Right ventricle myocardium superior (tissue), 1 donor: ENCODE measurements at regions of chr13 and their contacts with region 1.

Region 1: GRCh38 chr13:103788061-103788652 is 721.9 kb upstream of the SLC10A2 start:
- DNase-seq: peak; percentile 38
- ATAC-seq: peak; percentile 94

Region 2: GRCh38 chr13:103164251-103164650 is 623.9 kb before region 1 on chr13:
- intact Hi-C with region 1: no loop called
- DNase-seq: no peak
- ATAC-seq: no peak

Region 3: DNA sequence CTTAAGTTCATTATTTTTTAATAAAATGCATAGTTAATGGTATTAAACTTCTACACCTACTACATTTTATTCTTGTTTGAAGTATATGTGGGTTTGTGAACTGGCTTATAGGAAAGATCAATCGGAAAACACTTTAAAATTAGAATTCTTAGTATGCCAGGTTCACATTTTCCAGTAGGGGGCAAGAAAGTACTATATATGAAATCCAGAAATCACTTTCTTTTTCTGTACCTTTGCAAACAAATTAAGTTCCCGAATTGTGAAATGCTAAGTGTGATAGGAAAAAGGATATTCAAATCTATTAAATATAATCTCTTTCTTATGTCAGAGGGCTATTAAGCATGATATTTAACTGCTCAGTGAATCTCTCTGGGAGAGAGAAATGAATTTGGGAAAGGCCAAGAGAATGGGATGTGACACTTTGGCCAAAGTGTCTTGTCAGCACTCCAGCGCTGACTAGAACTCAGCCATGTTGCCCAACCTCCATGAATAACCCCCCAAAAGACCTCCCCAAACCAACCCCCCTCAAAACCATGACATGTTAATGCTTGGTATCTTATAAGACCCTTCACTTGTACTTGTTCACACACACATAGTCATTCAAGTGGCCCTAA is 599.3 kb before region 1 on chr13:
- intact Hi-C with region 1: loop called (anchors 5 kb)
- DNase-seq: no peak
- ATAC-seq: peak; percentile 53